IMR-90 (cell line): ENCODE measurements at regions of chr7 and their contacts with region 1.

Region 1: DNA sequence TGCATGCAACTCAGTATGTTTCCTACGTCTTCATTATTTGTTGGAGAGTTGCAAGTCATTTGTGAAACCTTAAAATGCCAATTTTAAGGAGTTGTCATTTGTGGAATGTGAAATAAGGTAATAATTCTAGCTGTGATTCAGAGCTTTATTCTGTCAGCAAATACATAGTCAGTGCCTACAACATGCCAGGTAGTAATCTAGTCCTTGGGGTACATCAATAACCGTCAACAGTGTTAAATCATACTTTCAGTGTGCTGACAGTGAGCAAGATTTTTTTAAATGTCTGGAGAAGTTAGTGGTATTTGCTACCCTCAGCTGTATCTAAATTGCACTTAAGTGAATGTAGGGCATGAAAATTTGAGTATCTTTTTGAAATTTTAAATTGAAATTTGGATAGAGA is 36.7 kb downstream of the MPLKIP start:
- DNase-seq: no peak
- ATAC-seq: no peak
- H3K4me3 ChIP-seq: no peak overlapping the region
- H3K27ac ChIP-seq: no peak overlapping the region
- H3K4me1 ChIP-seq: no peaks in the 10 kb centered on the region
- H3K27me3 ChIP-seq: no peaks in the 10 kb centered on the region
- CTCF ChIP-seq: no peak
- POLR2A ChIP-seq: no peak
- RAD21 ChIP-seq: no peak

Region 2: DNA sequence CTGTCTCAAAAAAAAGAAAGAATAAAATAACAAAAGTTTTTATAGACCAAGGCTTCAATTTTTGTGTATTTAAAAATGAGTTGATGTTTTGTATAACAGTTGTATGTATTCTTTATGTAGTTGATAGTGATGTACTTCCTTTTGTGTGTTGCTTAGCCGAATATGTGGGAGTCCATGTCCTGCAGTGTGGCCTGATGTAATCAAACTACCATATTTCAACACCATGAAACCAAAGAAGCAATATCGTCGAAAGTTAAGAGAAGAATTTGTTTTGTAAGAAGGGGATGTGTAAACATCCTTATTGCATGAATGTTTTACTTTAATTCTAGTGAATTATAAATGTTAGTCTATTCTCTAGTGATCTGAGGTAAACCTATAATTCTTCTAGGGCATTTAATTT is 19.9 kb before region 1 on chr7:
- CTCF ChIA-PET with region 1: no interaction called
- POLR2A ChIA-PET with region 1: interaction called, 16 read pairs
- dilution Hi-C with region 1: no loop called
- in situ Hi-C with region 1: no loop called
- intact Hi-C with region 1: no loop called
- DNase-seq: peak; percentile 54
- ATAC-seq: peak; percentile 75
- H3K4me3 ChIP-seq: no peak overlapping the region
- H3K27ac ChIP-seq: no peak overlapping the region
- H3K4me1 ChIP-seq: no peaks in the 10 kb centered on the region
- H3K27me3 ChIP-seq: no peaks in the 10 kb centered on the region
- CTCF ChIP-seq: no peak
- POLR2A ChIP-seq: no peak
- RAD21 ChIP-seq: no peak

Region 3: DNA sequence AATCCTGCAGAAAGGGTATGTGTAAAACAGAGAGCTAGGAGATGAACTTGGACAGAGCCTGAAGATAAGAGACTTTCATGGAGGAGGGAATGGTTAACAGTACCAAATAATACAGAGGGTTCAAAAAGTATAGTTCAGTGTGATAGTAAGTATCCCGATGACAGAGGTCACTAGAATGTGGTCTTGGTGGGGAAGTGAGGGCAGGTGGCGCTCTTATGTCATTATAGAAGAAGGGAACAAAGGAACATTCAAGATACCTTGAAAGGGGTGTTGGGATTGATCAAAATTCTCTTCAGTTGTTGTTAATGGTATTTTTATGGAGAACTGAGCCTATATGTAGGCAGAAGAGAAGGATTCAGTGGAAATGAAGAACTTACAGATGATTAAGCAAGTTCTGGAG is 349.6 kb after region 1 on chr7:
- CTCF ChIA-PET with region 1: no interaction called
- POLR2A ChIA-PET with region 1: no interaction called
- dilution Hi-C with region 1: no loop called
- in situ Hi-C with region 1: no loop called
- intact Hi-C with region 1: no loop called
- DNase-seq: no peak
- ATAC-seq: no peak
- H3K4me3 ChIP-seq: no peak overlapping the region
- H3K27ac ChIP-seq: no peak overlapping the region
- H3K4me1 ChIP-seq: no peaks in the 10 kb centered on the region
- H3K27me3 ChIP-seq: no peaks in the 10 kb centered on the region
- CTCF ChIP-seq: no peak
- POLR2A ChIP-seq: no peak
- RAD21 ChIP-seq: no peak